ENCODE measurements at regions of chr16 and their contacts with region 1.

Region 1: GRCh38 chr16:14249291-14250032 is 178.3 kb downstream of the MRTFB start:
- H3K4me3 ChIP-seq: no peak overlapping the region
- H3K27ac ChIP-seq: no peak overlapping the region
- H3K4me1 ChIP-seq: no peaks in the 10 kb centered on the region
- CTCF ChIP-seq: peak; percentile 28; the same call in 1 of the 2 replicates

Region 2: DNA sequence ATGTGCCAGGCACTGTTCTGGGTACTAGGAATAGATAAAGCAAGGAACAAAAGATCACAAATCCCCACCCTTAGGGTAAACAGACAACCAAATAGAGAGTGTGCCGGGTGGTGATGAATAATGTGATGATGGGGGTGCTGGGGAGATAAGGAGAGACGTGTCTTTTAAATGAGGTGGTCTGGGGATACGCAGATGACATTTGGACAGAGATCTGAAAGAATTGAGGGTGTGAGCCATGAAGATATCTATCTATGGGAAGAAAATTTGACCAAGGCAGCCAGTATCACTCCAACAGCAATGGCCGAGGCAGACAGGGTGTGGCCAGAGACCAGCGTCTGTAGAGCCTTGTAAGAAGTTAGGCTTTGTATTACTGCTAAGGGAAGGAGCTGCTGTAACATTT is 13.1 kb before region 1 on chr16:
- CTCF ChIA-PET with region 1: interaction called, 16 read pairs
- POLR2A ChIA-PET with region 1: no interaction called
- H3K4me3 ChIP-seq: no peak overlapping the region
- H3K27ac ChIP-seq: no peak overlapping the region
- H3K4me1 ChIP-seq: no peaks in the 10 kb centered on the region
- CTCF ChIP-seq: no peak

Region 3: GRCh38 chr16:14285513-14286385 is 36.3 kb after region 1 on chr16:
- CTCF ChIA-PET with region 1: interaction called, 10 read pairs
- POLR2A ChIA-PET with region 1: no interaction called
- H3K4me3 ChIP-seq: peak overlapping the region; percentile 79
- H3K27ac ChIP-seq: peak overlapping the region; percentile 48
- H3K4me1 ChIP-seq: no peaks in the 10 kb centered on the region; the same call in 1 of the 2 replicates
- CTCF ChIP-seq: no peak

Measured in HEK293 (cell line).